Activated CD8-positive, alpha-beta memory T cell treated with anti-CD3 and anti-CD28 coated beads, Interleukin-2, amount 10 ng/mL, durations not matched to agents 7 days and 5 days (primary cell): ENCODE measurements at regions of chr19 and their contacts with region 1.

Region 1: DNA sequence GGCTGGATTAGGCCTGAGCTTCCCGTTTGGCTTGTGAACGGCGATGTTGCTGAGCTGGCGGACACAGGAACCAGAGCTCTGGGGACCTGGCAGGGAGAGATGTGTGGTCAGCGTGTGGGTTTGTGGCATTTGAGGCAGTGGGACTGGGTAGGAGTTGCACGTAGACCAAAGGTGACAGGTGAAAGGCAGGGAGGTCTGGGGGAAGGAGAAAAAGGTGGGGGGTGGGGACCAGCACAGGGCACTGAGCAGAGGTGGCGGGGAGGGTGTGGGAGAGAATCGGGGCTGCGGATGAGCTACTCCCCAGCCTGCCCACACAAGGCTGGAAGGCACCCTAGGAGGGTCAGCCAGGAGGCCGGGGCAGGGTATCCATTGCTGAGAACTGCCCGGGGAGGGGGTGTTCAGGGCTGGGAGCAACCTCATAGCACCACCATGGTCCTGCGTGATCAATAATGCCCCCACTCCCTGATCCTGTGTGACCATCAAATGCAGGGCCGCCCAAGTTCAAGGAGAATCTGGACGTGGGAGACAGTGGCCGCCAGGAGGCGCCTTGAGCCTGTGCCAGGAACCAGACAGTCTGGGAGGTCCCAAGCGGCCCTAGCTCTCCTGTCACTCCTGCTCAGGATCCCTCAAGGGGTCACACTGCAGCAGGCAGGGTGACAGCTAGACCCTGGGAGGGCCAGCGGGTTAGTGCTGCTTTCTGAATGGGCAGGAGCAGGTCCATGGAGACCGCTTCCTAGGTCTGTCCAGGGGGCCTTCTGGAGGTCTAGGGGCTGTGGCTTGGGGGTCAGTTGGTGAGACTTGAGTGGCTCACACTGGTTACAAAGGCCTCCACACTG is 12.8 kb upstream of the SELENOW start:
- DNase-seq: peak; percentile 54
- ATAC-seq: peak; percentile 62
- H3K4me3 Mint-ChIP-seq: no peak overlapping the region
- H3K27ac Mint-ChIP-seq: no peak overlapping the region
- H3K4me1 Mint-ChIP-seq: peaks cover 8% of the 10 kb centered on the region
- H3K27me3 Mint-ChIP-seq: peaks cover 3% of the 10 kb centered on the region

Region 2: DNA sequence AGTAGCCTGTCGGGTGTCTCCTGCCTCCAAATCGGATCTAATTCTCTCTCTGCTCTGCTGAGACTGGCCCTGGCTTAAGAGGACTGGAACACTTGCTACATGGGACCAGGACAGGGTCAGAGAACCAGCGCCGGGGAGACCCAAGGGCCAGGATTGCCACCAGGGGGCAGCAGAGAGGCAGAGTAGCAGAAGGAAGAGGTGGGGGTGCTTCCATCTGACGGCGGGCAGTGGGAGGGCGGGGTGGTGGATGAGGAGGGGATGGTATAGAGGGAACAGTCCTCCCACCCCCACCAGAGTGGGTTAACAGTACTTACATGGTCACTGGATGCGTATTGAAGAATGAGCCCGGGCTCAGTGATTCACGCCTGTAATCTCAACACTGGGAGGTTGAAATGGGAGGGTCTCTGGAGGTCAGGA is 24.7 kb after region 1 on chr19:
- CTCF ChIA-PET with region 1: interaction called, 39 read pairs
- DNase-seq: peak; percentile 84
- ATAC-seq: peak; percentile 80
- H3K4me3 Mint-ChIP-seq: no peak overlapping the region
- H3K27ac Mint-ChIP-seq: no peak overlapping the region
- H3K4me1 Mint-ChIP-seq: peaks cover 2% of the 10 kb centered on the region
- H3K27me3 Mint-ChIP-seq: no peaks in the 10 kb centered on the region